Head of caudate nucleus (tissue), 42 donors: ENCODE measurements at regions of chr14 and their contacts with region 1.

Region 1: GRCh38 chr14:90383075-90383730 is 13.6 kb upstream of the CALM1 start:
- DNase-seq: peak; percentile 99 to 100 (median 100)

Region 2: DNA sequence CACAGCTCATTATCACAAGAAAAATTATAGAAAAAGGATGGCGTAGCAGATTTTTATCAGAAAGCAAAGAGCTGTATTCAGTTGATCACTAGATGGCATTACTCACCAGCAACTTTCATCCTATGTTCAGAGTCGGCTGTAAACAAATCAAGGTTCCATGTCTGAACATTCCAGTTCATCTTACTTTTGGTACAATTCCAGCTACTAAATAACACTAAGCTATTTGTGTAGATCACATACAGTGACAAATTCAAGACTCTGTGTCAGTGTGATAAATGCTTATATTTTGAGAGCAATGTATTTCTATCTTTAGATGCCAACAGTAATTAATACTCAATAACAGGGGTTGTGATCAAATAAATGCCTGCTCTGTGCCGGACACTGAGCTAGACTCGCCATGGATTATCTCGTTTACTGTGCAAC is 81.5 kb before region 1 on chr14:
- intact Hi-C with region 1: no loop called
- DNase-seq: peak in 5 of 42 donors; percentile 27 to 64 (median 50)

Region 3: GRCh38 chr14:90331497-90332435 is 51.4 kb before region 1 on chr14 and contains the start of gene NRDE2:
- intact Hi-C with region 1: loop called (anchors 5 kb)
- DNase-seq: peak; percentile 97 to 100 (median 99)

Region 4: DNA sequence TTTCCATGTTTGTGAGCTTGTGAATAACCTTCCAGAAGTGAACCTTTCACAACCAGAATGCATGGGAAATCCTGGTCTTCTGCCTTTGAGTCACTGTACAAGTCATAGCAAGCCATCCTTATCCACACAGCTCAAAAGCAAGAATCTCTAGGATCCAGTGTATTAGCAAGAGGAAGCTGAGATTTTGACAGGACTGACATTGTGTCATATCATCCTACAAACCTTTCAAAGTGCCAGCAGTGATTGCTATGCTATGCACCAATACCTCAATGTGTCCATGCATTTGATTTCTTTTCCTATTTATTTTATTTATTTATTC is 38.0 kb before region 1 on chr14:
- intact Hi-C with region 1: no loop called
- DNase-seq: no peak